ENCODE measurements at regions of chr6 and their contacts with region 1.

Region 1: GRCh38 chr6:26103770-26104456 is 16.7 kb downstream of the HFE start:
- DNase-seq: peak; percentile 96
- H3K4me3 Mint-ChIP-seq: peak overlapping the region; percentile 75
- H3K27ac Mint-ChIP-seq: peak overlapping the region; percentile 92
- H3K4me1 Mint-ChIP-seq: peaks cover 11% of the 10 kb centered on the region
- H3K27me3 Mint-ChIP-seq: no peaks in the 10 kb centered on the region
- CTCF ChIP-seq: peak; percentile 41

Region 2: DNA sequence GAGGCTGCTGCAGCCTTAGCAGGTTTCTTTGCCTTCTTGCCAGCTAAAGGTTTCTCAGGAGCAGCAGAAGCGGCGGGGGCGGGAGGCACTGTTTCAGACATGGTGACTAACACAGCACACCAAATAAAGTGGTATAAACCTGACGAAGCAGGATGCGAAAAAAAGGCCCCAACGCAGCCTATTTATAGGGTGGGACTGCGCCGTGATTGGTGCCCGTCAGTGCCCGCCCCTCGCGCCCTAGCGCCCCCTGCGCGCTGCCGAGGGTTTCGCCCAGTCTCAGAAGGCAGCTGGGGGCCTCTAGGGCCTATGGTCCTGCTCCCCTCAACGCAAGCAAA is 86.3 kb before region 1 on chr6:
- CTCF ChIA-PET with region 1: interaction called, 3 read pairs
- POLR2A ChIA-PET with region 1: interaction called, 22 read pairs
- intact Hi-C with region 1: no loop called
- DNase-seq: peak; percentile 93
- H3K4me3 Mint-ChIP-seq: peak overlapping the region; percentile 75
- H3K27ac Mint-ChIP-seq: peak overlapping the region; percentile 73
- H3K4me1 Mint-ChIP-seq: no peaks in the 10 kb centered on the region
- H3K27me3 Mint-ChIP-seq: no peaks in the 10 kb centered on the region
- CTCF ChIP-seq: peak; percentile 26

Region 3: DNA sequence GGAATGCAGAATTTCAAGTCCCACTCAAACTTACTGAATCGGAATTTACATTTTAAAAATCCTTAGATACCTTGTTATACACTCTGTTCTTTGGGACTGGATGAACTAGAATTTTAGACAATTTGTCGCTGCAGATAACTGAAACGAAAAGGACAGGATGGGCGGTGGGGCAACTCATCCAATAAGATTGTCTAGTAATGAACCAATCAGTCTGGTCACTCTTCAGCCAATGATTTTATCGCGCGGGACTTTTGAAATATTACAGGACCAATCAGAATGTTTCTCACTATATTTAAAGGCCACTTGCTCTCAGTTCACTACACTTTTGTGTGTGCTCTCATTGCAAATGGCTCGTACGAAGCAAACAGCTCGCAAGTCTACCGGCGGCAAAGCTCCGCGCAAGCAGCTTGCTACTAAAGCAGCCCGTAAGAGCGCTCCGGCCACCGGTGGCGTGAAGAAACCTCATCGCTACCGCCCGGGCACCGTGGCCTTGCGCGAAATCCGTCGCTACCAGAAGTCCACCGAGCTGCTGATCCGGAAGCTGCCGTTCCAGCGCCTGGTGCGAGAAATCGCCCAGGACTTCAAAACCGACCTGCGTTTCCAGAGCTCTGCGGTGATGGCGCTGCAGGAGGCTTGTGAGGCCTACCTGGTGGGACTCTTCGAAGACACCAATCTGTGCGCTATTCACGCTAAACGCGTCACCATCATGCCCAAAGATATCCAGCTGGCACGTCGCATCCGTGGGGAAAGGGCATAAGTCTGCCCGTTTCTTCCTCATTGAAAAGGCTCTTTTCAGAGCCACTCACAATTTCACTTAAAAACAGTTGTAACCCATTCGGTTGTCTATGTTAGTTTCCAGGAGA is 58.6 kb before region 1 on chr6:
- CTCF ChIA-PET with region 1: interaction called, 3 read pairs
- POLR2A ChIA-PET with region 1: interaction called, 60 read pairs
- intact Hi-C with region 1: no loop called
- DNase-seq: peak; percentile 95
- H3K4me3 Mint-ChIP-seq: peak overlapping the region; percentile 80
- H3K27ac Mint-ChIP-seq: peak overlapping the region; percentile 86
- H3K4me1 Mint-ChIP-seq: peaks cover 16% of the 10 kb centered on the region
- H3K27me3 Mint-ChIP-seq: no peaks in the 10 kb centered on the region
- CTCF ChIP-seq: no peak

Region 4: DNA sequence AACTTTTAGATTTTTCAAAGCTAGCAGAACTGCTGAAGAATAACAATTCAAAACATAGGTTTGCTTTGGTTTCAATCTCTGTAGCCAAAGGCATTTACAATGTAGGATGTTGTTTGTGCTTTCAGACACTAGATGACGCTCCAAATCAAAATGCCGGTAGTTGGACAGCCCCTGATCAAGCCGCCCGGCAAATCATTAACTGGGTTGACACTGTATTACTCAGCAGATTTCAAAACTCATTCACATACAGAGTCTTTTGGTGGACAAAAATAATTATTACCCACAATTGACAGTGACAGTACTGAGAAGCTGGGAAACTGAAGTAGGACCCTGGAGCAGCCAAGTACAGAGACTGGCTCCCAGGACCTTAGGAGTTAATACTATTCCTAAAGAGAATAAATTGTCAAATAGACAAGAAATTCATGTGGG is 37.9 kb before region 1 on chr6:
- CTCF ChIA-PET with region 1: interaction called, 425 read pairs
- POLR2A ChIA-PET with region 1: interaction called, 235 read pairs
- intact Hi-C with region 1: no loop called
- DNase-seq: peak; percentile 87
- H3K4me3 Mint-ChIP-seq: no peak overlapping the region
- H3K27ac Mint-ChIP-seq: peak overlapping the region; percentile 23
- H3K4me1 Mint-ChIP-seq: no peaks in the 10 kb centered on the region
- H3K27me3 Mint-ChIP-seq: no peaks in the 10 kb centered on the region
- CTCF ChIP-seq: peak; percentile 81

Region 5: DNA sequence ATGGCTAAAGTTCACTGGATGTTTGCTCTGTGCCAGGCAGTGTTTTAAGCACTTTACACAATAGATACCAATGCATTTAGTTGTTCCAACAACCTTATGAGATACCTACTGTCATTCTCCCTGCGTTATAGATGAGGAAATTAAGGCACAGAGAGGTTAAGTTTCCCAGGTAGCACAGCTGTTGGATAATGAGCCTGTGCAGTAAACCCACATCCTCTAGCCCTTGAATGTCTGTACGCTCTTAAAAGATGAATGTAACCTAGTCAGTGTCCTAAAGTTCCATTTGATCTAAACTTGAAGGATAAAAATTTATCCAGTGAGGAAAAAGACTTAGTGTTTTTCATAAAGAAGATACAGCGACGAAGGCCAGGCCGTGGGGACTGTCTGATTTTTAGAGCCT is 11.3 kb after region 1 on chr6:
- CTCF ChIA-PET with region 1: interaction called, 3 read pairs
- POLR2A ChIA-PET with region 1: interaction called, 61 read pairs
- intact Hi-C with region 1: no loop called
- DNase-seq: no peak
- H3K4me3 Mint-ChIP-seq: no peak overlapping the region
- H3K27ac Mint-ChIP-seq: no peak overlapping the region
- H3K4me1 Mint-ChIP-seq: no peaks in the 10 kb centered on the region
- H3K27me3 Mint-ChIP-seq: no peaks in the 10 kb centered on the region
- CTCF ChIP-seq: no peak

Region 6: DNA sequence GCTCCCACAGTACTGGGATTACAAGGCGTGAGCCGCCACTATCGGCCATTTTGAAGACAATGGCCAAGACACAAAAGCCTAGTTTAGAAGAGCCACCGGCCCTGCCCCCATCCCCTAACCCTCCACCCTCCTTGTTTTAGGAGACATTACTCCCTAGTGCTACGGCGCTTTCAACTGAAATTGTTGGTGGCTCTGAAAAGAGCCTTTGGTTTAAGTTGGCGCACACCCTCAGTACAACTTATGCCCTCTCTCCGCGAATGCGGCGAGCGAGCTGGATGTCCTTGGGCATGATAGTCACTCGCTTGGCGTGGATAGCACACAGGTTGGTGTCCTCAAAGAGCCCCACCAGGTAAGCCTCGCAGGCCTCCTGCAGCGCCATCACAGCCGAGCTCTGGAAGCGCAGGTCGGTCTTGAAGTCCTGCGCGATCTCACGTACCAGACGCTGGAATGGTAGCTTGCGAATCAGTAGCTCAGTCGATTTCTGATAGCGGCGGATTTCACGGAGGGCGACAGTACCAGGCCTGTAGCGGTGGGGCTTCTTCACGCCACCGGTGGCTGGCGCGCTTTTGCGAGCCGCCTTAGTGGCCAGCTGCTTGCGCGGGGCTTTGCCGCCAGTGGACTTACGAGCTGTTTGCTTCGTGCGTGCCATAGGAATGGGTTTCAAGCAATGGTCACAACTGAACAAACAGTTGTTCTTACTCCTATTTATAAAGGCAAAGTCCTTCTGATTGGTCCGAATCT is 146.2 kb after region 1 on chr6:
- CTCF ChIA-PET with region 1: no interaction called
- POLR2A ChIA-PET with region 1: no interaction called
- intact Hi-C with region 1: no loop called
- DNase-seq: peak; percentile 87
- H3K4me3 Mint-ChIP-seq: peak overlapping the region; percentile 94
- H3K27ac Mint-ChIP-seq: peak overlapping the region; percentile 63
- H3K4me1 Mint-ChIP-seq: peaks cover 7% of the 10 kb centered on the region
- H3K27me3 Mint-ChIP-seq: no peaks in the 10 kb centered on the region
- CTCF ChIP-seq: peak; percentile 42

Region 7: GRCh38 chr6:27838058-27838944 is 1734.4 kb after region 1 on chr6:
- CTCF ChIA-PET with region 1: no interaction called
- POLR2A ChIA-PET with region 1: interaction called, 16 read pairs
- intact Hi-C with region 1: no loop called
- DNase-seq: peak; percentile 98
- H3K4me3 Mint-ChIP-seq: no peak overlapping the region
- H3K27ac Mint-ChIP-seq: no peak overlapping the region
- H3K4me1 Mint-ChIP-seq: peaks cover 32% of the 10 kb centered on the region
- H3K27me3 Mint-ChIP-seq: no peaks in the 10 kb centered on the region
- CTCF ChIP-seq: no peak